Right ventricle myocardium inferior (tissue), 1 donor: ENCODE measurements at regions of chr6 and their contacts with region 1.

Region 1: GRCh38 chr6:154806804-154807203 is 73.6 kb downstream of the SCAF8 start:
- DNase-seq: no peak
- ATAC-seq: no peak

Region 2: DNA sequence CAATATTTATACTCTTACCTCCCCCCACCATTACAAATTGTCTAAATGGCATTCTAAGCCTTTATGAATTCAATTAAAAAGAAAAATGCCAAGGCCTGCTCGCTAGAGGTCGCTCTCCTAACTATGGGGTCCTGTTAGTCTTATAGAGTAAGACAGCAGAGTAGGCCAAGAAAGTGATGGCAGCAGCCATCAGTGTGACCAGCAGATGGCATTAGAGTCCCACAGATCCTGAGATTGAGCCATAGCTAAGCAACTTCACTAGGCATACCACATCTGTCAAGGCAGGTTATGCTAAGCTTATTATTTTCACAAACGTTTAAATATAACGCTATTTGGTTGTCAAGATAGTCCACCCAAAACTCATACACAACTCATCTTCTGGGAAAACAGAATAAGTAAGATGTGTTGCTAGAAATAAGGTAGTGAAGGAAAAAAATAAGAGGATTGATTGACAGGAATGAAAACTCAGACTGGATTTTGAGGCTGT is 131.2 kb before region 1 on chr6:
- intact Hi-C with region 1: loop called (anchors 2 kb)
- DNase-seq: peak; percentile 84
- ATAC-seq: peak; percentile 99

Region 3: GRCh38 chr6:155143029-155143577 is 336.3 kb after region 1 on chr6:
- intact Hi-C with region 1: no loop called
- DNase-seq: no peak
- ATAC-seq: no peak